CD8-positive, alpha-beta T cell (primary cell): ENCODE measurements at regions of chr5 and their contacts with region 1.

Region 1: GRCh38 chr5:69093771-69094482 is at the start of gene SLC30A5:
- DNase-seq: peak; percentile 96 to 100 (median 98)
- ATAC-seq: peak; percentile 98
- H3K4me3 ChIP-seq: peak within 1 kb of the TSS; percentile 67 to 69
- H3K4me3 Mint-ChIP-seq: peak within 1 kb of the TSS; percentile 91
- H3K27ac ChIP-seq: peak within 1 kb of the TSS; percentile 92 to 93
- H3K27ac Mint-ChIP-seq: peak within 1 kb of the TSS; percentile 95
- H3K4me1 ChIP-seq: peaks cover 20% of the 10 kb centered on the region
- H3K4me1 Mint-ChIP-seq: peaks cover 36% of the 10 kb centered on the region
- H3K27me3 ChIP-seq: no peaks in the 10 kb centered on the region
- H3K27me3 Mint-ChIP-seq: no peaks in the 10 kb centered on the region
- CTCF ChIP-seq: peak; percentile 76
- total RNA-seq, gene SLC30A5: 14.5 to 18.5 TPM

Region 2: GRCh38 chr5:69024241-69024651 is 69.7 kb before region 1 on chr5:
- CTCF ChIA-PET with region 1: no interaction called
- POLR2A ChIA-PET with region 1: no interaction called
- intact Hi-C with region 1: no loop called
- DNase-seq: peak in 2 of 9 experiments; percentile 37 to 49
- ATAC-seq: peak; percentile 56
- H3K4me3 ChIP-seq: no peak overlapping the region
- H3K4me3 Mint-ChIP-seq: no peak overlapping the region
- H3K27ac ChIP-seq: no peak overlapping the region
- H3K27ac Mint-ChIP-seq: no peak overlapping the region
- H3K4me1 ChIP-seq: no peaks in the 10 kb centered on the region
- H3K4me1 Mint-ChIP-seq: no peaks in the 10 kb centered on the region
- H3K27me3 ChIP-seq: no peaks in the 10 kb centered on the region
- H3K27me3 Mint-ChIP-seq: peaks cover 9% of the 10 kb centered on the region
- CTCF ChIP-seq: peak; percentile 16

Region 3: GRCh38 chr5:69035665-69036064 is 58.3 kb before region 1 on chr5:
- CTCF ChIA-PET with region 1: no interaction called
- POLR2A ChIA-PET with region 1: no interaction called
- intact Hi-C with region 1: no loop called
- DNase-seq: no peak
- ATAC-seq: no peak
- H3K4me3 ChIP-seq: no peak overlapping the region
- H3K4me3 Mint-ChIP-seq: no peak overlapping the region
- H3K27ac ChIP-seq: no peak overlapping the region
- H3K27ac Mint-ChIP-seq: no peak overlapping the region
- H3K4me1 ChIP-seq: no peaks in the 10 kb centered on the region
- H3K4me1 Mint-ChIP-seq: no peaks in the 10 kb centered on the region
- H3K27me3 ChIP-seq: no peaks in the 10 kb centered on the region
- H3K27me3 Mint-ChIP-seq: peaks cover 7% of the 10 kb centered on the region
- CTCF ChIP-seq: no peak

Region 4: DNA sequence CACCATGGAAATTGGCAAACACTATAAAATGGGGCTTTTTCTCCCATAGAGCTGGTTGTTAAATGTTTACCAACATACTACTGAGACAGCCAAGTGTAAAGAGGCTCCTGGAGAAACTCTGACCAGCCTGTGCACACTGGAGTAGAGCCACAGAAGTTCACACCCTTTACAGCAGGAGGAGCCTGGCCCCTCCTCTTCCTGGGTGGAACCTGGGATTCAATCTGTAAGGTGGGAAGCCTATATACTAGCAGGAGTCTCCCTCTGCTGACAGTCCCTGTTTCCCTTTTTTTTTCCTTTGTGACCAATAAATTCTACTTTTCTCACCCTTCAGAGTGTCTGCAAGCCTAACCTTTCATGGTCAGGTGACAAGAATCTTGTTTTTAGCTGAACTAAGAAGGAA is 10.5 kb before region 1 on chr5:
- CTCF ChIA-PET with region 1: interaction called, 16 read pairs
- POLR2A ChIA-PET with region 1: interaction called, 6 read pairs
- intact Hi-C with region 1: no loop called
- DNase-seq: no peak
- ATAC-seq: no peak
- H3K4me3 ChIP-seq: no peak overlapping the region
- H3K4me3 Mint-ChIP-seq: no peak overlapping the region
- H3K27ac ChIP-seq: no peak overlapping the region
- H3K27ac Mint-ChIP-seq: no peak overlapping the region
- H3K4me1 ChIP-seq: no peaks in the 10 kb centered on the region
- H3K4me1 Mint-ChIP-seq: no peaks in the 10 kb centered on the region
- H3K27me3 ChIP-seq: no peaks in the 10 kb centered on the region
- H3K27me3 Mint-ChIP-seq: no peaks in the 10 kb centered on the region
- CTCF ChIP-seq: no peak

Region 5: GRCh38 chr5:69134126-69134525 is 40.2 kb after region 1 on chr5:
- CTCF ChIA-PET with region 1: no interaction called
- POLR2A ChIA-PET with region 1: no interaction called
- intact Hi-C with region 1: no loop called
- DNase-seq: no peak
- ATAC-seq: no peak
- H3K4me3 ChIP-seq: no peak overlapping the region
- H3K4me3 Mint-ChIP-seq: no peak overlapping the region
- H3K27ac ChIP-seq: no peak overlapping the region
- H3K27ac Mint-ChIP-seq: no peak overlapping the region
- H3K4me1 ChIP-seq: no peaks in the 10 kb centered on the region
- H3K4me1 Mint-ChIP-seq: no peaks in the 10 kb centered on the region
- H3K27me3 ChIP-seq: no peaks in the 10 kb centered on the region
- H3K27me3 Mint-ChIP-seq: no peaks in the 10 kb centered on the region
- CTCF ChIP-seq: no peak

Region 6: DNA sequence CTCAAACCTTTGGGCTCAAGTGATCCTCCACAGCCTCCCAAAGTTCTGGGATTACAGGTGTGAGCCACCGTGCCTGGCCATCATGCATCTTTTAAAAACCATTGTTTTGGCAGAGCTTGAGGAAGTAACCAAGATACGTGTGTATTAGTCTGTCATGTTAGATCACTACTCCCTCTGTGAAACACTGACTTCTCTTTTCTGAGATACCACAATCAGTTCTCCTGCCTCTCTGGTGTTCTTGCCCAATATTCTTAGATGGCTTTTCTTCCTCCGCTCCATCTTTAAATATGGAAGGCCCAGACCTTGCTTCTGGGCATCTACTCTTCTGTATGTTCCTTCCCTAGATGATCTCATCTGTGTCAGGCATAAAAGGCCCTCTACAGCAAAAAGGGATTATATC is 58.8 kb after region 1 on chr5:
- CTCF ChIA-PET with region 1: no interaction called
- POLR2A ChIA-PET with region 1: no interaction called
- intact Hi-C with region 1: no loop called
- DNase-seq: no peak
- ATAC-seq: no peak
- H3K4me3 ChIP-seq: no peak overlapping the region
- H3K4me3 Mint-ChIP-seq: no peak overlapping the region
- H3K27ac ChIP-seq: no peak overlapping the region
- H3K27ac Mint-ChIP-seq: no peak overlapping the region
- H3K4me1 ChIP-seq: no peaks in the 10 kb centered on the region
- H3K4me1 Mint-ChIP-seq: no peaks in the 10 kb centered on the region
- H3K27me3 ChIP-seq: no peaks in the 10 kb centered on the region
- H3K27me3 Mint-ChIP-seq: no peaks in the 10 kb centered on the region
- CTCF ChIP-seq: no peak

Region 7: DNA sequence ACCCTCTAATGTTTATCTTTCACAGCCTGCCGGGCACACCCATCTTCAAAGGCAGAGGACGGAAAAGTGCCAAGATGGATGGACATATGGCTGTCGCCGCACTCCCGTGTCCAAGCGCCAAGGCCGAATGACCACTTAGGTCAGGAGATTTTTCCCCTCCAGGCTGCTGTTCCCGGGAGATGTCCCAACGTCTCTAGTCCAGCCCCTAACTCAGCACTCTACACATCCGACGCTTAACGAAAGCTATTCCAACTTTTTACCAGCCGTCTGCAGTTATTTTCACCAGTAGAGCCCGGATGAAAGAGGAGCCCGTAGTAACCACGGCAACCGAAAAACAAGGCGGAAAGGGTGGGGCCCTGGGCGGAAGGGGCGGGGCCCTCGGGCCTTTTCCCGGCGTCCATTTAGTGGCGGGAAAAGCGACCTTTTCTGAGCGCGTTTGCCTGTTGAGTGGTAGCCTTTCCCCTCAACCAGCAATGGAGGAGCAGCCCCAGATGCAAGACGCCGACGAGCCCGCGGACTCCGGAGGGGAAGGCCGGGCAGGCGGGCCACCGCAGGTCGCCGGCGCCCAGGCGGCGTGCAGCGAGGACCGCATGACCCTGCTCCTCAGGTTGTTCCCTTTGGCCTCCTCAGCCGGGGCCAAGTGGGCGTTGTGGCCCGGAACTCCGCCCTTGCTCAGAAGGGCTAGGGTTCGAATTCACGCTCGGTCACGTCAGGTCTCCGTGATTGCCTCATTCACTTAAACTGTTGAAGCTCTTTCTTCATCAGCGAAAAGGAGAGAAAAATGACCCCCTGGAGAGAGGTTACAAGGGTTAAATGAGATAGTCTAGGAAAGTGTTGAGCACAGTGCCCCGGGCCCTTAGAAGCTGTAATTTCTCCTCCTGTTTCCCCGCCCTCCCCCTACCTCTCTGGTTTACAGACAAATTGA is 95.5 kb after region 1 on chr5 and contains the start of gene CENPH:
- CTCF ChIA-PET with region 1: no interaction called
- POLR2A ChIA-PET with region 1: no interaction called
- intact Hi-C with region 1: loop called (anchors 1 to 2 kb)
- DNase-seq: peak; percentile 82 to 93 (median 90)
- ATAC-seq: peak; percentile 94
- H3K4me3 ChIP-seq: peak within 1 kb of the TSS; percentile 75 to 77
- H3K4me3 Mint-ChIP-seq: peak within 1 kb of the TSS; percentile 91
- H3K27ac ChIP-seq: peak within 1 kb of the TSS; percentile 66 to 73
- H3K27ac Mint-ChIP-seq: peak within 1 kb of the TSS; percentile 84
- H3K4me1 ChIP-seq: peaks cover 10% of the 10 kb centered on the region
- H3K4me1 Mint-ChIP-seq: peaks cover 16% of the 10 kb centered on the region
- H3K27me3 ChIP-seq: no peaks in the 10 kb centered on the region
- H3K27me3 Mint-ChIP-seq: no peaks in the 10 kb centered on the region
- CTCF ChIP-seq: no peak
- total RNA-seq, gene CENPH: 4.1 to 4.6 TPM

Region 8: DNA sequence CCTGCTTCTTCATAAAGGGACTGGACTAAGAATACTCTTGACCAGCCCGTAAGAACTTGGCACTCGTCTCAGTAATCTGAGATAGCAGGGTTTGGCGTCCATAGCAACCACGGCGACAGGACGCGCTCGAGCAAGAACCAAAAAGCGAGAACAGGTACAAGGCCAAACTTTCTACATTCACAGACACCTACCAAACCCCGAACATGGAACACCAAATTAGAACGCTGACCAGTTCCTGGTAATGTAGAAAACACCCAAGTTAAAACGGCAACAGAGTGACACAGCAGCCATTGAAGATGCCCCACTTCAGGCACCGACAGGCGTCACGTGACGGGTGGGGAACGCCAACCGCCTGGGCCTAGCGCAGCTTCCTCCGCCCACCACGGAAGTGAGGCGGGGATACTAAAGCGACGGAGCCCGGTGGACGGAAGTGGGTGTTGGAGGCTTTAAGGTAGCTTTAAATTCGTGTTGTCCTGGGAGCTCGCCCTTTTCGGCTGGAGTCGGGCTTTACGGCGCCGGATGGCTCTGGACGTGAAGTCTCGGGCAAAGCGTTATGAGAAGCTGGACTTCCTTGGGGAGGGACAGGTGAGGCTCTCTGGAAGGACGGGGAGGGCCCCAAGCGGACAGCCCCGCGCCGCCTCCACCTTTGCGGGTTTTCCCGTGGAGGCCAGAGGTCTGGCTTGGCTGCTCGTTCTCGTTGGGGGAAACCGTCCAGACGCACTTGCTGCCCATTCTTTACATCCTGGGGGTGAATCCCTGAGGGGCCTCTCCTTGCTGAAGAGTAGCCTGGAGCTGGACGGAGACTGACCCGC is 140.7 kb after region 1 on chr5 and contains the start of gene CDK7:
- CTCF ChIA-PET with region 1: no interaction called
- POLR2A ChIA-PET with region 1: interaction called, 4 read pairs
- intact Hi-C with region 1: loop called (anchors 1 to 5 kb)
- DNase-seq: peak; percentile 83 to 96 (median 92)
- ATAC-seq: peak; percentile 99
- H3K4me3 ChIP-seq: peak within 1 kb of the TSS; percentile 71 to 98
- H3K4me3 Mint-ChIP-seq: peak within 1 kb of the TSS; percentile 94
- H3K27ac ChIP-seq: peak within 1 kb of the TSS; percentile 67 to 85
- H3K27ac Mint-ChIP-seq: peak within 1 kb of the TSS; percentile 89
- H3K4me1 ChIP-seq: peaks cover 20% of the 10 kb centered on the region
- H3K4me1 Mint-ChIP-seq: peaks cover 39% of the 10 kb centered on the region
- H3K27me3 ChIP-seq: no peaks in the 10 kb centered on the region
- H3K27me3 Mint-ChIP-seq: no peaks in the 10 kb centered on the region
- CTCF ChIP-seq: no peak
- total RNA-seq, gene CDK7: 27.5 to 29.4 TPM